Activated CD4-positive, alpha-beta T cell treated with anti-CD3 and anti-CD28 coated beads, Interleukin-2, amount 10 ng/mL, durations not matched to agents 24 days and 14 days (primary cell): ENCODE measurements at regions of chr1 and their contacts with region 1.

Region 1: GRCh38 chr1:65067491-65068201 is 80.4 kb upstream of the AK4 start:
- DNase-seq: peak; percentile 84
- H3K4me3 Mint-ChIP-seq: peak overlapping the region; percentile 85
- H3K27ac Mint-ChIP-seq: peak overlapping the region; percentile 97
- H3K4me1 Mint-ChIP-seq: peaks cover 33% of the 10 kb centered on the region
- H3K27me3 Mint-ChIP-seq: no peaks in the 10 kb centered on the region

Region 2: DNA sequence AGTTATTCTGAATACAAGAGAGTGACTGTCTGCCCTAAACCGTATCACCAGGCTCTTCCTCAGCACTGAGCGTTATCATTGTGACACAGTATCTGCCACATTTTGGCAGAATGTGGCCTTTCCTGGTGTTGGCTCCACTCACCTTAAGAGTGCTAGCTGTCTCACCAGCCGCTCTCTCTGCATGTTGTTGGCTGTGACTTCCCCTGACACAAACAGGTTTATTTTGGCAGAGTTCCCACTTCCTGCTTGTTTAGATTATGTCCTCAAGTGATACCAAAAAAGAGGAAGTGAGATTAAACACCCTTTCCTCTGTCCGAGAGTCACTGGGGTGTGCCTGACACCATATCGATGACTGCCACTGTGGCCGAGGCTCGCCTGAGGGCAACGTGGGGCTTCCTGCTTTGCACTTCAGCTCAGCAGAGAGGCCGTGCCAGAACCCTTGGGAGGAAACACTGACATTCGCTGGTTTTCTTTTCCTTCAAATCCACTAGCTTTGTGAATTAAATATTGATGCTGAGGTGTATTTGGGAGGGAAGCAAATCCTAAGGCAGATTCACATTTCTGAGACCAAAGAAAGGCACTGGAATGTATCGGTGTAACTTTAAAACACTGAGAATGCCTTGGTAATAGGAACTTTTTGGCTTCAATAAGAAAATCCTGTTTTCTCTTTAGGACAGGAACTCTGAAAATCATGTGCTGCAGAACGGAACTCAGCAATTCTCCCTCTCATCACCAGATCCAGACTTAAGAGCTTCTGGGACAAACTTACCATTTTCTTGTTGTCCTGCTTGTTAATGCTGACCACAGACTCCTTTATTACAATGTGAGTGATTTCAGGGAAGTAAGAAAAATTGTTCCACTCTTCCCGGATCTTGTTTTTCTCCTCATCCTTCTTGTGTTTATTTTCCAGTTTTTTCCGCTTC is 203.4 kb before region 1 on chr1:
- intact Hi-C with region 1: loop called (anchors 5 kb)
- DNase-seq: peak; percentile 77
- H3K4me3 Mint-ChIP-seq: no peak overlapping the region
- H3K27ac Mint-ChIP-seq: peak overlapping the region; percentile 75
- H3K4me1 Mint-ChIP-seq: peaks cover 24% of the 10 kb centered on the region
- H3K27me3 Mint-ChIP-seq: no peaks in the 10 kb centered on the region

Region 3: DNA sequence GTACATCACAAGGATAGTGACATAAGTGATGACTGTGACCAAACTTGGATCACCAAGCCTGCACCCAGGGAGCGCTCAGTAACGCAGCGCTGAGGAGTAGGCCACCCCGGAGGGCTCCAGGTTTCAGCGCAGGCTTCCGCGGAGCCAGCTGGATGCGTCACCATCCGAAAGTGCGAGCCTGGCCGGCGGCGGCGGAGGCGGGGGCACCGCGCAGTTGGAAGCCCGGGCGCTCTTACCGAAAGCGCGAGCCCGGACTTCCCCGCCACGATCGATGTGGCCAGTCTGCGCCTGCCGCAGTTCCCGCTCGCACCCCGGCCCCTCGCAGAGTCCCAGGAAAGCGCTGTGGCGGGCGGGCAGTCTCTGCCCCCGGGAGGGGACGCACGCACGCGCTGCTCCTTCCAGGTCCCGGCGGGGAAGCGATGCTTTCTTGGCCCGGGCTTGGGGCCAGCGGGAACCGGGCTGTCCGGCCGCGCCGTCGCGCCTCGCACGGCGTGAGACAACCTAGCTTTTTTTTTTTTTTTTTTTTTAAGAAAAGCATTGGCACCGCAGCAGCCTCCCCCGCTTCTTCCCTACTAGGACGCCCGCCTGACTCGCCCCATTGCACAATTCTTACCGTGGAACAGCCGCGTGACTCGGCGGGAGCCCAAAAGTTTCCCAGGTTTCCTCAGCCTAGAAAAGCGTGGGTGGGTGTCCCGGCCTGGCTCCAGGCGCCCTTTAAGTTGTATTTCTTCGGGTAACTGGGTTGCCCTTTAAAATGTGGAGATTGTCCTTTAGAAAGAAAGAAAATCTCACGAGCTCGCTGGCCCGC is 64.9 kb before region 1 on chr1:
- intact Hi-C with region 1: loop called (anchors 5 kb)
- DNase-seq: peak; percentile 90
- H3K4me3 Mint-ChIP-seq: peak overlapping the region; percentile 70
- H3K27ac Mint-ChIP-seq: peak overlapping the region; percentile 43
- H3K4me1 Mint-ChIP-seq: peaks cover 23% of the 10 kb centered on the region
- H3K27me3 Mint-ChIP-seq: peaks cover 33% of the 10 kb centered on the region

Region 4: GRCh38 chr1:65213271-65214023 is 145.8 kb after region 1 on chr1:
- intact Hi-C with region 1: loop called (anchors 5 kb)
- DNase-seq: peak; percentile 63
- H3K4me3 Mint-ChIP-seq: peak overlapping the region; percentile 72
- H3K27ac Mint-ChIP-seq: peak overlapping the region; percentile 93
- H3K4me1 Mint-ChIP-seq: peaks cover 69% of the 10 kb centered on the region
- H3K27me3 Mint-ChIP-seq: no peaks in the 10 kb centered on the region

Region 5: GRCh38 chr1:65687428-65688214 is 620.0 kb after region 1 on chr1:
- intact Hi-C with region 1: loop called (anchors 2 kb)
- DNase-seq: peak; percentile 93
- H3K4me3 Mint-ChIP-seq: no peak overlapping the region
- H3K27ac Mint-ChIP-seq: no peak overlapping the region
- H3K4me1 Mint-ChIP-seq: peaks cover 5% of the 10 kb centered on the region
- H3K27me3 Mint-ChIP-seq: peaks cover 26% of the 10 kb centered on the region